ENCODE measurements at regions of chr4 and their contacts with region 1.

Region 1: GRCh38 chr4:186144142-186144955 is 39.8 kb downstream of the FAM149A start:
- DNase-seq: peak; percentile 79
- ATAC-seq: peak; percentile 85

Region 2: DNA sequence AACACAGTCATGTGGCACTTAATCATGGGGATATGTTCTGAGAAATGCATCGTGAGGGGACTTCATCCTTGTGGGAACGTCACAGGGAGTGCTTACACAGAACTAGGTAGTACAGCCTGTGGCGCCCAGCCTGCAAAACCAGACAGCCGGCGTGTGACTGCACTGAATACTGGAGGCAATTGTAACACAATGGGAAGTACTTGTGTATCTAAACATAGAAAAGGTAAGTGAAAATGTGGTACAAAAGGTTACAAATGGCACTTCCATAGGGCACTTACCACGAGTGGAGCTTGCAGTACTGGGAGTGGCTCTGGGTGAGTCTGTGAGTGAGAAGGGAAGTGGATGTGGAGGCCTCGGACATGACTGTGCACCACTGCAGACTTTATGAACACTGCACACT is 70.2 kb before region 1 on chr4:
- intact Hi-C with region 1: no loop called
- DNase-seq: no peak
- ATAC-seq: peak; percentile 39

Region 3: GRCh38 chr4:186191200-186192065 is 47.1 kb after region 1 on chr4 and contains the start of gene CYP4V2:
- intact Hi-C with region 1: loop called (anchors 2 kb)
- DNase-seq: peak; percentile 91
- ATAC-seq: peak; percentile 92
- total RNA-seq, gene CYP4V2: 22.7 TPM

Measured in Right ventricle myocardium inferior (tissue), 1 donor.